ENCODE measurements at regions of chr11 and their contacts with region 1.

Region 1: GRCh38 chr11:75270896-75271418 is 30.4 kb downstream of the TPBGL start:
- DNase-seq: peak in 3 of 9 experiments; percentile 24 to 61 (median 44)
- ATAC-seq: no peak
- H3K4me3 ChIP-seq: no peak overlapping the region
- H3K4me3 Mint-ChIP-seq: no peak overlapping the region
- H3K27ac ChIP-seq: no peak overlapping the region
- H3K27ac Mint-ChIP-seq: peak overlapping the region; percentile 98
- H3K4me1 ChIP-seq: peaks cover 52% of the 10 kb centered on the region
- H3K4me1 Mint-ChIP-seq: peaks cover 44% of the 10 kb centered on the region
- H3K27me3 ChIP-seq: no peaks in the 10 kb centered on the region
- H3K27me3 Mint-ChIP-seq: no peaks in the 10 kb centered on the region
- CTCF ChIP-seq: peak; percentile 48

Region 2: DNA sequence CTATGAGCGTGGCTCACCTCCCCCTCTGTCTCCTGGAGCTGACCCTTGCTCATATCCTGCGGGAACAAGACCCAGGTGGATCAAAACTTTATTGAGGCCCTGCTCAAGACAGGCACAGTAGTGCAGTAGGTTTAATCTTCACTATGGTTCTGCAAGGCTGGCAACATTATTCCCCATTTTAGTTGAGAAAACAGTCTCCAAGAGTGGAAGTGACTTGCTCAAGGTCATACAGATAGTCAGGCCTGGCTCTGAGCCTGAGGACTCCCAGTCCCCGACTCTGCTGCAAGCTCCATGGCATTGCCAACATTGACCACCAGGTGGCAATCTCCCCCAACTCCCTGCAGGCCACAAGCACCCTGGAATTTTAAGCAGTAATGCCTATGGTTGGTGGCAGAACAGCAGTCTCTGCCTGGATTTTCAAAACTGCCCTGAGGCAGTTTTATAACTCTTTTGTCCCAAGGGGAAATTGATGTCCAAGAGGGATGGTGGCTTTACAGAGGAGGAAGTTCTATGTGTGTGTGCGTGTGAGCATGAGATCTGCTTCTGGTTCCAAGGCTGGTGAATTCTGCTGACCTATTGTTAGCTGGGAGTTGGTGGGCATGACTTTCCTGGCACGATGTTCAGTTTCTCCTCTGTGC is 248.1 kb before region 1 on chr11:
- CTCF ChIA-PET with region 1: interaction called, 14 read pairs
- POLR2A ChIA-PET with region 1: no interaction called
- intact Hi-C with region 1: loop called (anchors 1 kb)
- DNase-seq: peak; percentile 55 to 82 (median 71)
- ATAC-seq: peak; percentile 87
- H3K4me3 ChIP-seq: no peak overlapping the region
- H3K4me3 Mint-ChIP-seq: no peak overlapping the region
- H3K27ac ChIP-seq: no peak overlapping the region
- H3K27ac Mint-ChIP-seq: no peak overlapping the region
- H3K4me1 ChIP-seq: no peaks in the 10 kb centered on the region
- H3K4me1 Mint-ChIP-seq: no peaks in the 10 kb centered on the region
- H3K27me3 ChIP-seq: no peaks in the 10 kb centered on the region
- H3K27me3 Mint-ChIP-seq: no peaks in the 10 kb centered on the region
- CTCF ChIP-seq: peak; percentile 95

Region 3: GRCh38 chr11:75133976-75134375 is 137.0 kb before region 1 on chr11:
- CTCF ChIA-PET with region 1: interaction called, 177 read pairs
- POLR2A ChIA-PET with region 1: no interaction called
- intact Hi-C with region 1: no loop called
- DNase-seq: no peak
- ATAC-seq: no peak
- H3K4me3 ChIP-seq: no peak overlapping the region
- H3K4me3 Mint-ChIP-seq: no peak overlapping the region
- H3K27ac ChIP-seq: no peak overlapping the region
- H3K27ac Mint-ChIP-seq: no peak overlapping the region
- H3K4me1 ChIP-seq: no peaks in the 10 kb centered on the region
- H3K4me1 Mint-ChIP-seq: no peaks in the 10 kb centered on the region
- H3K27me3 ChIP-seq: no peaks in the 10 kb centered on the region
- H3K27me3 Mint-ChIP-seq: peaks cover 18% of the 10 kb centered on the region
- CTCF ChIP-seq: no peak

Region 4: GRCh38 chr11:75241036-75241905 is 29.7 kb before region 1 on chr11:
- CTCF ChIA-PET with region 1: interaction called, 191 read pairs
- POLR2A ChIA-PET with region 1: interaction called, 11 read pairs
- intact Hi-C with region 1: no loop called
- DNase-seq: peak; percentile 77 to 91 (median 83)
- ATAC-seq: peak; percentile 93
- H3K4me3 ChIP-seq: peak overlapping the region; percentile 31 to 61
- H3K4me3 Mint-ChIP-seq: peak overlapping the region; percentile 79
- H3K27ac ChIP-seq: no peak overlapping the region
- H3K27ac Mint-ChIP-seq: no peak overlapping the region
- H3K4me1 ChIP-seq: peaks cover 9% of the 10 kb centered on the region
- H3K4me1 Mint-ChIP-seq: peaks cover 10% of the 10 kb centered on the region
- H3K27me3 ChIP-seq: peaks cover 17 to 20% of the 10 kb centered on the region in 2 experiments
- H3K27me3 Mint-ChIP-seq: peaks cover 49% of the 10 kb centered on the region
- CTCF ChIP-seq: peak; percentile 77

Region 5: DNA sequence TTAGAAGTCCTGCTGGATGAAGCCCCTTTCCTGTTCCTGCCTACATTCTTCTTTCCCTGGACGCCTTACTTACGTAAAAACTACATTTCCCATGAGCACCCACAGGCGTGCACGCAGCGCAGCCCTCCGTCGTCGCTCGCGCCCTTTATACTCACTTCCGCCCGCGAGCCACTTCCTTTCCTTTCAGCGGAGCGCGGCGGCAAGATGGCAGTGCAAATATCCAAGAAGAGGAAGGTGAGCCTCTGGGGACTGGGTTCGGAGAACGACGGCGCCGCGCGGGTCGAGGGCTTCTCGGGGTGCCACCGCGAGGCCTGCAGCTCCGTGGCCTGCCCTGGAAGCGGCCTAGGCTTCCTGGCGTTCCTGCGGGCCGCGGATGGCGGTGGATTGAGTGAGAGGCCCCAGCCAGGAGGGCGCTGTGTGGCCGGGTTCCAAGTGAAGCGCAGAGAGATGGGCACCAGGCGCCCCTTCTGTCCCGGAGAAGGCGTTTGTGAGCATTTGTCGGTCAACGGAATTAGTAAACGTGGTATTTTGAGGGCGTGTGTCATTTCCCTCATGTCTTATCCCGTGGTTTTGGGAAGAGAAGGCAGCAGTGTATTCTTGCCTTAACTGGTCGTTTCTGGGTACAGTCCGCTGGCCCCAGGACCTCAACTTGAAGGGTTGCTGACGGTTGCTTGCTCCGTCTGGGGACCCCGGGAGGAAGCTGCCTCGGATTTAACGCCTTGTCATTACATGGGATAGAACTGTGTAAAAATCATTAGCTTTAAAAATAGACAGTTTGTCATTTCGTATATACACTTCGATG is 128.6 kb after region 1 on chr11 and contains the start of gene RPS3:
- CTCF ChIA-PET with region 1: interaction called, 3 read pairs
- POLR2A ChIA-PET with region 1: interaction called, 16 read pairs
- intact Hi-C with region 1: no loop called
- DNase-seq: peak; percentile 72 to 93 (median 88)
- ATAC-seq: peak; percentile 88
- H3K4me3 ChIP-seq: peak within 1 kb of the TSS; percentile 69 to 76
- H3K4me3 Mint-ChIP-seq: peak within 1 kb of the TSS; percentile 95
- H3K27ac ChIP-seq: peak within 1 kb of the TSS; percentile 88 to 89
- H3K27ac Mint-ChIP-seq: peak within 1 kb of the TSS; percentile 95
- H3K4me1 ChIP-seq: peaks cover 28% of the 10 kb centered on the region
- H3K4me1 Mint-ChIP-seq: peaks cover 48% of the 10 kb centered on the region
- H3K27me3 ChIP-seq: no peaks in the 10 kb centered on the region
- H3K27me3 Mint-ChIP-seq: no peaks in the 10 kb centered on the region
- CTCF ChIP-seq: no peak
- total RNA-seq, gene RPS3: 4,683 to 5,039 TPM

Measured in CD8-positive, alpha-beta T cell (primary cell).